Activated T-helper 1 cell treated with anti-CD3 and anti-CD28 coated beads, Interleukin-12 subunit alpha, Interleukin-12 subunit beta, Interleukin-2, Interleukin-4 antibody, amounts not matched to agents 30 ng/mL and 10 ng/mL and 1 ng/mL, durations not matched to agents 14 hours and 24 hours and 36 hours (primary cell): ENCODE measurements at regions of chr1 and their contacts with region 1.

Region 1: GRCh38 chr1:228927946-228928898 is 192.9 kb downstream of the RHOU start:
- DNase-seq: peak; percentile 12
- H3K4me3 Mint-ChIP-seq: no peak overlapping the region
- H3K27ac Mint-ChIP-seq: peak overlapping the region; percentile 41
- H3K4me1 Mint-ChIP-seq: peaks cover 15% of the 10 kb centered on the region
- H3K27me3 Mint-ChIP-seq: peaks cover 26% of the 10 kb centered on the region

Region 2: GRCh38 chr1:228751360-228752113 is 176.7 kb before region 1 on chr1:
- intact Hi-C with region 1: loop called (anchors 5 kb)
- DNase-seq: no peak
- H3K4me3 Mint-ChIP-seq: no peak overlapping the region
- H3K27ac Mint-ChIP-seq: no peak overlapping the region
- H3K4me1 Mint-ChIP-seq: peaks cover 42% of the 10 kb centered on the region
- H3K27me3 Mint-ChIP-seq: peaks cover 39% of the 10 kb centered on the region

Region 3: DNA sequence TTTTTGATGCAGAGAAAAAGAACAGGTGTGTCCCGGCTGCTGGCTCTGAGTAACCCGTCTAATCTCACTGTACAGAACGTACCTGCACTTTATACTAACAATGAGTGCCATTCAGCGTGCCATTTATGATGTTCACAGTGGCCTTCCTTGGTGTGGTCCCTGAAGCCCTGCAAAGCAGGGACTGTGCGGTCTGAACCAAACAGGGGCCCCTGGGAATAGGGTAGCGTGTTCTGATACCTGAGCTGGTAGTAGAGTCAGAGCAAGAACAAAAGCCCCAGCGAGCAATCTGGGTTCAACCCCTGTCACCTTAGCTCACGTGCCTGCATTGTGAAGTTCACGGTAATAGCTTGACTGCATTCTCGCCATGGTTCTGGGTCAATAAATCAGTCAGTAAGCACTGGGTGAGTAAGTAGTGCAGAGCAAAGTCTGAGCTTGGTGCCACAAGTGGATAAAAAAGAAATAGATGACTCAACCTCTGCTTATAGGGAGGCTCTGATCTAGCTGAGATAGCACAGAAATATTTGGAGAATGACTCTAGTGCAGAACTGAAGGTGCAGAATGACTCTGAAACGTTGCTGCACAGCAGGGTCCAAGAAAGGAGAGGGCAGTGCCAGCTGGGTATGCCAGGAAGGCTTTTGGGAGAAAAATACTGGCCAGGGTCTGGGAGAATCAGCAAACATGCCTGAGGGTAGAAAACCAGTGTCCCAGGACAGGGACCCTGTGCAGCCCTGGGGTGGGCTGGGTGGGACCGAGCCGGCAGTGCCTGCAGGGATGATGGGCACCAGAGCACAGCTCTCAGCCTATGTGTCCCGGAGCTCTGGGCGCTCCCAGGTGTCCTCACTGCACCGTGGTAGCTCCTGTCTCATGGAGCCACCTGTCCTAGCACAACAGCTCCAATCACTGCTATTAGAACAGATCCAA is 67.1 kb before region 1 on chr1:
- intact Hi-C with region 1: loop called (anchors 2 kb)
- DNase-seq: no peak
- H3K4me3 Mint-ChIP-seq: no peak overlapping the region
- H3K27ac Mint-ChIP-seq: no peak overlapping the region
- H3K4me1 Mint-ChIP-seq: peaks cover 37% of the 10 kb centered on the region
- H3K27me3 Mint-ChIP-seq: peaks cover 21% of the 10 kb centered on the region